ENCODE measurements at regions of chr5 and their contacts with region 1.

Region 1: DNA sequence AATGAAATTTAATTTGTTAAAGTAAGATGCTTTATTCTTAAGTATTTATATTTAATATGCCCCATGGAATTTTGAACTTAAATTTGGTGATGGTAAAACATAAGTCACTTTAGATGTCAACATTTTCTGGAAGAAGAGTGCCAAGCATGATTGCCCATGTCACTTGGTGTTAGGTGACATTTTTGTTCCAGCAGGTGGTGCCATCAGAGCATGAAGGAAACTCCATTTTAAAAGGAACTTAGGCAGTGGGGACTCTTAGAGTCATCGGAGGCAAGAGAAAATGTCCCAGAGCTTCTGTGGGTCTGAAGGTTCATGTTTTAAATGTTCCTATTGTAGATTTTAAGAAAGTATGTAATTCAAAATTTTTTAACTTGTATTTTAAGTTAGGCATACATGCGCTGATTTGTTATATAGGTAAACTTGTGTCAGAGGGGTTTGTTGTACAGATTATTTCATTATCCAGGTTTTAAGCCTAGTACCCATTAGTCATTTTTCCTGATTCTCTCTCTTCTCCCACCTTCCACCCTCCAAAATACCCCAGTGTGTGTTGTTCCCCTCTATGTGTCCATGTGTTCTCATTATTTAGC is 789.3 kb downstream of the SEMA5A start:
- DNase-seq: peak in 1 of 4 experiments; percentile 3
- ATAC-seq: no peak
- H3K4me3 ChIP-seq: no peak overlapping the region
- H3K27ac ChIP-seq: no peak overlapping the region
- H3K4me1 ChIP-seq: no peaks in the 10 kb centered on the region
- H3K27me3 ChIP-seq: no peaks in the 10 kb centered on the region
- CTCF ChIP-seq: no peak
- EP300 ChIP-seq: no peak
- POLR2A ChIP-seq: no peak
- RAD21 ChIP-seq: no peak

Region 2: DNA sequence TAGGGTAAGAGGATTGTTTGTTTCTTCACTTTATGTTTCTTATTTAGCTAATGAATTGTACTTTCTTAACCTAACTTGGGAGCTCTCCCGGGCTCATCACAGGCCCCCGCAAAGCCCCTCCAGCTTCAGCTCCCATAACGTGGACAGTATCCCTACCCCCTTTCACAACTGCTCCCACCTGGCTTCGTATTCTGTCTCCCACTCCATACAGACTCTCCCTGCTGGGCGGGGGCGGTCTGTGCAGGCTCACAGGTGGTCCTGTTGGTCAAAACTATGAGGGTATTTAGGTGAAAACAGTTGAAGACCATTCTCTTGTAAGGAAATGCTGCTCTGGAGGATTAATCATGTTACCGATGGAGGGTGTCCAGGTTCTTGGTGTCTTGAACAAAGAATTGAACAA is 16.0 kb before region 1 on chr5:
- CTCF ChIA-PET with region 1: no interaction called
- POLR2A ChIA-PET with region 1: no interaction called
- in situ Hi-C with region 1: no loop called
- intact Hi-C with region 1: no loop called
- DNase-seq: no peak
- ATAC-seq: no peak
- H3K4me3 ChIP-seq: no peak overlapping the region
- H3K27ac ChIP-seq: no peak overlapping the region
- H3K4me1 ChIP-seq: no peaks in the 10 kb centered on the region
- H3K27me3 ChIP-seq: no peaks in the 10 kb centered on the region
- CTCF ChIP-seq: no peak
- EP300 ChIP-seq: no peak
- POLR2A ChIP-seq: no peak
- RAD21 ChIP-seq: no peak

Region 3: GRCh38 chr5:9207817-9208418 is 451.3 kb after region 1 on chr5:
- CTCF ChIA-PET with region 1: no interaction called
- POLR2A ChIA-PET with region 1: no interaction called
- in situ Hi-C with region 1: no loop called
- intact Hi-C with region 1: loop called (anchors 10 kb)
- DNase-seq: peak; percentile 18 to 68 (median 37)
- ATAC-seq: peak; percentile 89
- H3K4me3 ChIP-seq: no peak overlapping the region
- H3K27ac ChIP-seq: no peak overlapping the region
- H3K4me1 ChIP-seq: no peaks in the 10 kb centered on the region
- H3K27me3 ChIP-seq: no peaks in the 10 kb centered on the region
- CTCF ChIP-seq: peak; percentile 23 to 77 (median 25); a peak in 3 of 6 replicates
- EP300 ChIP-seq: no peak
- POLR2A ChIP-seq: no peak
- RAD21 ChIP-seq: peak; percentile 69 to 85

Measured in K562 (cell line).